ENCODE measurements at regions of chr10 and their contacts with region 1.

Region 1: GRCh38 chr10:125822878-125823662 is at the starts of genes BCCIP and UROS:
- DNase-seq: peak; percentile 83 to 84
- ATAC-seq: peak; percentile 98 to 99
- H3K4me3 ChIP-seq: peak within 1 kb of the TSS; percentile 81 to 93 (median 82)
- H3K27ac ChIP-seq: peak within 1 kb of the TSS; percentile 80 to 92 (median 86)
- H3K4me1 ChIP-seq: peaks cover 36 to 41% of the 10 kb centered on the region in 2 donors
- H3K27me3 ChIP-seq: no peaks in the 10 kb centered on the region
- CTCF ChIP-seq: peak in 2 of 5 experiments; percentile 18 to 22
- POLR2A ChIP-seq: peak; percentile 62 to 69
- total RNA-seq, gene BCCIP: 51.1 to 85.6 (median 67.0) TPM
- total RNA-seq, gene UROS: 29.1 to 78.2 (median 64.2) TPM

Region 2: DNA sequence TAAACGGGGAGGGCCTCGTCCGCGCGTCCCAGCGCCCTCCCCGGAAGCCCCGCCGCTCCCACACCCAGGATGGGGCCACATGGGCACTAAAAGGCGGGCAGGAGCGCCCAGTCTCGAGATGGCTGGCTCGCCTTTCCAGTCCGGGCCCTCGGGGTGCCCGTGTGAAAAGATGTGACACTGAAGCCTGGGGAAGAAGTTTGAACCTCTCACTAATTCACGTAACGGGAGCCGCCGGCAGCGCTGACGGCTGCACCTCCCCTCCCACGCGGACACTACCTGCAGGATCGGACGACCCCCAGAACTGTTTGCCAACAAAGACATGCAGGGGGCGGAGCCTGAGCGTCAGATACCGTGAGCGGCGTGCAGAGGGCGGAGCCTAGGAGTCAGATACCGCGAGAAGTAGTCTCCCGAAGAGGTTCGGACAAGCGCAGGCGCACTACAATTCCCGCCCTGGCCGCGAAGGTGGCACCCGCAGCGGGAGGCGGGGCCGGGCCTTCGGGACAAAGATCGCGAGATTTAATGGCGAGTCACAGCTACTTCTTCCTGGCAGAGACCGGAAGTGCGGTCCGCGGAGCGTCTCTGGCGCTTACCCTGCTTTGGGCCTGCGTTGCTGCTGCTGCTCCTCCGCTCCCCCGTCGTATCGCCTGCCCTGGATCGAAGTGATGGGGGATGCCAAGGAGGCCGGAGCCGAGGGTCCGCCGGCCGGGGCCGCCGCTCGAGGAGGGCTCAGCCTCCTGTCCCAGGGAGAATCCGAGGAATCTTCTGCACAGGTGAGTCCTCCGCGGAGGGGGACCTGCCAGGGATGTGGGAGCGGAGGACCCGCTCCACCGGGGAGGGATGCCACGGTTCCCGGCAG is 103.7 kb before region 1 on chr10 and contains the start of gene EDRF1:
- in situ Hi-C with region 1: loop called in 2 of 4 experiments (anchors 10 kb)
- intact Hi-C with region 1: loop called (anchors 2 kb)
- DNase-seq: peak; percentile 96 to 99
- ATAC-seq: peak; percentile 99 to 100
- H3K4me3 ChIP-seq: peak within 1 kb of the TSS; percentile 82 to 99 (median 95)
- H3K27ac ChIP-seq: peak within 1 kb of the TSS; percentile 84 to 88 (median 88)
- H3K4me1 ChIP-seq: peaks cover 12 to 17% of the 10 kb centered on the region in 2 donors
- H3K27me3 ChIP-seq: no peaks in the 10 kb centered on the region
- CTCF ChIP-seq: no peak
- POLR2A ChIP-seq: peak; percentile 32 to 71
- total RNA-seq, gene EDRF1: 8.1 to 19.4 (median 10.3) TPM